ENCODE measurements at regions of chr13 and their contacts with region 1.

Region 1: DNA sequence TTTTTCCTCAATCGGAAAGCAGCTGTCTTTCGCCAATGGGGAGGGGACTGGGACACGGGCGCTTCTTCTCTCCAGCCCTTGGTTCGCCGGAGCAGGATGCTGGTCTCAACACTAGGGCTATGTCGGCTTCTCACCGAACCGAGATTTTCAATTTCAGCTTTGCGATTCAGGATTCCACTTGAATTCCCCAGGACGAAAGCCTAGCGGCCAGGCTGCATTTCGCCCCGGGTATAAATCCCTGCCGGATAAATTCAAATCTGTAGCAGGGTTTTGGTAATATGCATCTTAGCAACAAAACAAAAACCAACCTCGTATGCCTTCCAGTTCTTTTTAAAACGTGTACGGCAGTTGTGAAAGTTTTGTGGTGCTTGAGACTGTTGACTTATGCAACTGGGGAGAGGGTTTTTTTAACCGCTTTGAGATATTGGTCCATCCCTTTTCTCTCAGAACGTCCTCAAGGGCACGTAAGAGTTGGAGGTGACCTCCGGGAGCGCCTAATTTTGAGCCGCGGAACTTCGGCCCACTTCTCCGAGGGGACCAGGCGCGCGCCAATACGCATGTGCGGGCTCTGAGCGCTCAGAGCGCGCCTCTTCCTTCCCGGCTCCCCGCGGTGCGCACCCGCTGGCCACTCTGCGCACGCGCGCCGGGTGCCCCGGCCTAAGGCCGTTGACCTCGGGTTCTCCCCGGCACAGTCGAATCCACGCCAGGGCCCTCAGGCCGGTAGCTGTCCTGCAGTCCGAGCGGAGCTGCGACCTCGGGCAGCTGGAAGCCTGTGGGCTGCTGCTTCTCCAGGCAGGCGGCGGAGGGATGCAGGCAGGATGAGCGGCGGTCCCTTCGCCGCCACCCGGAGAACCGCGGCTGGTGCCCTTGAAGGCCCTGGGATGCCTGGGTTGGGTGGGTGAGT is 7.6 kb downstream of the POU4F1 start:
- DNase-seq: peak; percentile 65
- ATAC-seq: peak; percentile 42

Region 2: DNA sequence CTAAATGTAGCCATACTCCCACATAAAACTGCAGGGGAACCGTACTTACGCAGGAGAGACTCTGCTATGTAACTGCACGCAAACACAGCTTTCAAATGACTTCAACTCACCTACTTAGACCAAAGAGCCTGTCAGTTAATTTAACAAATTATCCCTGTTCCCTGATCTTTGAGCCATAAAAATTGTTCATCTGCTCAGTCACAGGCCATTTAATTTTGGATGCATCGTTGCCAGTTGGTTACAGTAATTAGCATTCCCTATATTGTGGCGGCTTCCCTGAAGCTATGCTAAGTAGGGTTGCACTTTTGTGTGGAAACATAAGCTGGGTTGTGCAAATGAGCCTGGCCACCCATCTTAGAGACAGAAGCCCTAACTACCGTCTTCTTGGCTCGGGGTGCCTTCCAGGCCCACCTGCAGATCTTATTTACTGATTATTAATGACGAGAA is 84.4 kb after region 1 on chr13:
- intact Hi-C with region 1: loop called (anchors 5 kb)
- DNase-seq: no peak
- ATAC-seq: no peak